HCT116 (cell line): ENCODE measurements at regions of chr20 and their contacts with region 1.

Region 1: GRCh38 chr20:32902456-32903420 is 44.0 kb downstream of the EFCAB8 start:
- DNase-seq: peak; percentile 27
- ATAC-seq: peak; percentile 94
- H3K4me3 ChIP-seq: no peak overlapping the region
- H3K27ac ChIP-seq: no peak overlapping the region
- H3K4me1 ChIP-seq: no peaks in the 10 kb centered on the region
- H3K27me3 ChIP-seq: no peaks in the 10 kb centered on the region
- CTCF ChIP-seq: peak; percentile 91 to 94 (median 92)
- POLR2A ChIP-seq: no peak
- RAD21 ChIP-seq: peak; percentile 92

Region 2: DNA sequence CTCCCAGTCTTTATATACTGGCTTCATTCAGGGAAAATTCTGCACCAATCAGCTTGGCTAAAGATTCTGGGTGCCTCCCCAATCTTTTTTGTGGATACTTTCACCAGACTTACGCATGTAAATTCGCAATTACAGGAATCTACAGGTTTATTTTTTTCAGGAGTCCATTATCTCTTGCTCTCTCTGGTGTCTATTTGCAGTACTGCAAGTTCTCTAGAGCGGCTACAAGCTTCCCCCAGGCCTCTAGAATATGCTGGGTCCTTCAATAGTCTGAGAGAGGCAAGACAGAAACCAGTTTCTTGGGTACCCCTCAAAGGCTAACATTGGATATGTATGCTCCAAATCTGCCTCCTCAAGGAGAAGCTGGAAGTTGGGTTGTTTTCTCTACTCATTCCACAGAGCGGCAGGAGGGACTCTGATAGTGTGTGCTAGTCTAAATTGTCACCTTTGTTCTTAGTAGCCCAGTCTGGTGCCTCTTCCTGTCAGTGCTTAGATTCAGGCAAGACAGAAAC is 43.0 kb after region 1 on chr20:
- CTCF ChIA-PET with region 1: interaction called, 22 read pairs
- POLR2A ChIA-PET with region 1: interaction called, 3 read pairs
- RAD21 ChIA-PET with region 1: no interaction called
- intact Hi-C with region 1: loop called (anchors 1 kb)
- DNase-seq: peak; percentile 21
- ATAC-seq: peak; percentile 96
- H3K4me3 ChIP-seq: no peak overlapping the region
- H3K27ac ChIP-seq: no peak overlapping the region
- H3K4me1 ChIP-seq: no peaks in the 10 kb centered on the region
- H3K27me3 ChIP-seq: peaks cover 12% of the 10 kb centered on the region; the same call in 1 of the 2 replicates
- CTCF ChIP-seq: peak; percentile 33 to 68 (median 66); a peak in 4 of 6 replicates
- POLR2A ChIP-seq: no peak
- RAD21 ChIP-seq: peak; percentile 50

Region 3: GRCh38 chr20:33076662-33077372 is 174.1 kb after region 1 on chr20:
- CTCF ChIA-PET with region 1: interaction called, 14 read pairs
- POLR2A ChIA-PET with region 1: no interaction called
- RAD21 ChIA-PET with region 1: interaction called in 1 of 2 experiments, 3 read pairs
- intact Hi-C with region 1: loop called (anchors 1 kb)
- DNase-seq: peak; percentile 35
- ATAC-seq: peak; percentile 96
- H3K4me3 ChIP-seq: no peak overlapping the region
- H3K27ac ChIP-seq: no peak overlapping the region
- H3K4me1 ChIP-seq: peaks cover 8 to 17% of the 10 kb centered on the region in 2 experiments; a peak in 3 of 4 replicates
- H3K27me3 ChIP-seq: no peaks in the 10 kb centered on the region
- CTCF ChIP-seq: peak; percentile 52 to 87 (median 80); a peak in 5 of 6 replicates
- POLR2A ChIP-seq: no peak
- RAD21 ChIP-seq: peak; percentile 63

Region 4: GRCh38 chr20:33097001-33097400 is 194.3 kb after region 1 on chr20:
- CTCF ChIA-PET with region 1: interaction called, 29 read pairs
- POLR2A ChIA-PET with region 1: no interaction called
- RAD21 ChIA-PET with region 1: interaction called, 4 to 5 read pairs
- intact Hi-C with region 1: loop called (anchors 1 kb)
- DNase-seq: no peak
- ATAC-seq: no peak
- H3K4me3 ChIP-seq: no peak overlapping the region
- H3K27ac ChIP-seq: no peak overlapping the region
- H3K4me1 ChIP-seq: no peaks in the 10 kb centered on the region
- H3K27me3 ChIP-seq: no peaks in the 10 kb centered on the region
- CTCF ChIP-seq: no peak
- POLR2A ChIP-seq: no peak
- RAD21 ChIP-seq: no peak

Region 5: GRCh38 chr20:33211817-33212424 is 309.2 kb after region 1 on chr20:
- CTCF ChIA-PET with region 1: interaction called, 5 read pairs
- POLR2A ChIA-PET with region 1: no interaction called
- RAD21 ChIA-PET with region 1: no interaction called
- intact Hi-C with region 1: loop called (anchors 5 kb)
- DNase-seq: peak; percentile 61
- ATAC-seq: peak; percentile 95
- H3K4me3 ChIP-seq: no peak overlapping the region
- H3K27ac ChIP-seq: no peak overlapping the region
- H3K4me1 ChIP-seq: no peaks in the 10 kb centered on the region
- H3K27me3 ChIP-seq: peaks cover 56% of the 10 kb centered on the region
- CTCF ChIP-seq: peak; percentile 72 to 80 (median 75)
- POLR2A ChIP-seq: no peak
- RAD21 ChIP-seq: peak; percentile 76

Region 6: GRCh38 chr20:33299111-33299603 is 396.4 kb after region 1 on chr20:
- CTCF ChIA-PET with region 1: no interaction called
- POLR2A ChIA-PET with region 1: no interaction called
- RAD21 ChIA-PET with region 1: no interaction called
- intact Hi-C with region 1: loop called (anchors 1 kb)
- DNase-seq: peak; percentile 40
- ATAC-seq: peak; percentile 97
- H3K4me3 ChIP-seq: no peak overlapping the region
- H3K27ac ChIP-seq: no peak overlapping the region
- H3K4me1 ChIP-seq: peaks cover 0 to 2% of the 10 kb centered on the region in 2 experiments; a peak in 1 of 4 replicates
- H3K27me3 ChIP-seq: 0 out of 2 replicates have a peak, but pooled peaks cover 3% of the 10 kb centered on the region
- CTCF ChIP-seq: peak; percentile 79 to 94 (median 89)
- POLR2A ChIP-seq: no peak
- RAD21 ChIP-seq: peak; percentile 79